ENCODE measurements at regions of chr12 and their contacts with region 1.

Region 1: GRCh38 chr12:109775172-109775881 is 57.9 kb downstream of the TRPV4 start:
- DNase-seq: peak; percentile 63 to 88 (median 78)
- ATAC-seq: peak; percentile 72 to 90 (median 89)
- H3K4me3 ChIP-seq: no peak overlapping the region
- H3K27ac ChIP-seq: no peak overlapping the region
- H3K4me1 ChIP-seq: peaks cover 3 to 5% (median 3%) of the 10 kb centered on the region in 3 donors
- H3K27me3 ChIP-seq: no peaks in the 10 kb centered on the region
- CTCF ChIP-seq: peak; percentile 74 to 86 (median 80)

Region 2: DNA sequence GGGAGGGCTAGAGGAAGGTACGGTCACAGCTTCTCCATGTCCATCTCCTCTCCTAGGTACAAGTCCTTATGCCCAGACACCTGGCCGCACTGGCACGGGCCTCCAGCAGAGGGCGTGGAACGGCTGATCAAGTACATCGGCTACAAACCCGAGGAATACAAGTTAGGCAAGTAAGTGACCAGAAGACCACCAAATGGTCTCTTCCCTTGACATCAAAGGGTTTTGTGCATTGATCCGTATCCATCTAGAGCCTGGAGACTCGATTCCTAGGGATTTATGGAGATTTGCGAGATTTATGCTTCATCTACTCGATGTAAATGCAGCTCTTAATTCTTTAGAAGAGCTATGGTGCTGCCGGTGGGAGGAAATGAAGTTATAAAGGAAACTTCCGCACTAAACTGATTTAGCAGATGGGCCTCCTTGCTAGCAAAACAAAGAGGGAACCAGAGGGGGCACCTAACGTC is 342.5 kb before region 1 on chr12:
- intact Hi-C with region 1: loop called in 1 of 3 experiments (anchors 10 kb)
- DNase-seq: peak; percentile 69 to 95 (median 84)
- ATAC-seq: peak; percentile 70 to 92 (median 88)
- H3K4me3 ChIP-seq: no peak overlapping the region
- H3K27ac ChIP-seq: no peak overlapping the region
- H3K4me1 ChIP-seq: no peaks in the 10 kb centered on the region
- H3K27me3 ChIP-seq: no peaks in the 10 kb centered on the region
- CTCF ChIP-seq: peak; percentile 63 to 80 (median 73)

Region 3: GRCh38 chr12:109518820-109519665 is 256.3 kb before region 1 on chr12:
- intact Hi-C with region 1: loop called in 2 of 3 experiments (anchors 5 to 10 kb)
- DNase-seq: peak in 5 of 6 donors; percentile 27 to 74 (median 46)
- ATAC-seq: peak in 3 of 4 donors; percentile 81 to 87 (median 86)
- H3K4me3 ChIP-seq: no peak overlapping the region
- H3K27ac ChIP-seq: peak overlapping the region in 1 of 4 donors; percentile 14
- H3K4me1 ChIP-seq: no peaks in the 10 kb centered on the region
- H3K27me3 ChIP-seq: no peaks in the 10 kb centered on the region
- CTCF ChIP-seq: peak; percentile 55 to 77 (median 60)

Region 4: GRCh38 chr12:109597795-109598427 is 177.4 kb before region 1 on chr12:
- intact Hi-C with region 1: loop called in 2 of 3 experiments (anchors 5 kb)
- DNase-seq: peak; percentile 78 to 95 (median 89)
- ATAC-seq: peak; percentile 87 to 97 (median 94)
- H3K4me3 ChIP-seq: no peak overlapping the region
- H3K27ac ChIP-seq: no peak overlapping the region
- H3K4me1 ChIP-seq: peaks cover 0 to 14% (median 12%) of the 10 kb centered on the region in 3 donors
- H3K27me3 ChIP-seq: no peaks in the 10 kb centered on the region
- CTCF ChIP-seq: peak; percentile 90 to 96 (median 92)

Region 5: DNA sequence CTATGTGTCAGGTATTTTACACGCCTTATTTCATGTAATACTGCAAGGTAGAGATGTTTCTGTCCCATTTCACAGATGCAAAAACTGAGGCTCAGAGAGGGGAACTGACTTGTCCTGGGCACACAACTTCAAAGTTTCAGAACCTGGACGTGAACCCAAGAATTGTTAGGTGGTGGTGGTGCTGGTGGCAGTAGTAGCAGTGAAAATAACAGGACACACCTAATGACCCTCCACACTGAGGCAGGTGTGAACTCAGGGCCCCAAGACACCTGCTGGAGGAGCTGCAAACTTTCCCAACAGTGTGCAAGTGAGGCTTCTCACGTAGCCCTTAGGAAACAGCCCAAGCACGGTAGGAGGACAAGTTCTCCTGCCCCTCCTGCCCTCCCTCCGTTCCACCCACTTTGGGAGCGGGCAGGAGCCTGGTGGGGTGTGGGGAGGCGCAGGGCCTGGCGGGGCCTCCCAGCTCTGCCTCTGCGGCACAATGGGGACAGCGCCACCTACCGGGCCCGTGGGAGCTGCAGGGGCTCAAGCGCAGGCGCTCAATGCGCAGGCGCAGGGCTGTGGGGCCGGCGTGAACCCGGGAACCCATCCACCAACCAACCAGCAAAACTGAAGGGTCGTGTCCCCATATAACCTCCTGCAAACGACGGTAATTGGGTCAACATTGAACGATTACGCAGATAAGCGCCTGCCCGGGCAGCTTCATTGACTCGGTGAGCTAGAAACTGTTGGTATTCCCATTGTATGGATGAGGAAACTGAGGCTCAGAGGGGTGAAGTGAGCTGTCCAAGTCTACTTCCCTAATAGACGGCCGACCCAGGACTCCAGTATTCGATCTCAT is 69.9 kb after region 1 on chr12:
- intact Hi-C with region 1: no loop called
- DNase-seq: peak; percentile 79 to 99 (median 91)
- ATAC-seq: peak; percentile 98 to 99 (median 98)
- H3K4me3 ChIP-seq: peak overlapping the region in 1 of 4 donors; percentile 26
- H3K27ac ChIP-seq: no peak overlapping the region
- H3K4me1 ChIP-seq: no peaks in the 10 kb centered on the region
- H3K27me3 ChIP-seq: no peaks in the 10 kb centered on the region
- CTCF ChIP-seq: peak; percentile 97 to 100 (median 99)

Region 6: DNA sequence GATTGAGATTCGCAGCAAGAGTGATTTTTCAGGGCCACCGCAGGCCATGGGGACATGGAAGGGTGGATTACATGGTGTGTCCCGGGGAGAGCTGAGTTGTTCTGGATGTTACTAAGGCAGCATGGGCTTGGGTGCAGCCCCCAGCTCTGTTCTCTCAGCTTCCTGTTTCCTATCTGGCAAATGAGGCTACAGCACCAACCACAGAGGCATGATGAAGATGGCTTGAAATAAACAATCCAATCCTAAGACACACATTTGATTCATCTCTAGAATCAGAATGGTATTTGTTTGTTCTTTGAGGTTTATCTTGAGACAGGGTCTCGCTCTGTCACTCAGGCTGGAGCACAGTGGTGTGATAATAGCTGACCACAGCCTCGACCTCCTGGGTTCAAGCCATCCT is 83.4 kb after region 1 on chr12:
- intact Hi-C with region 1: no loop called
- DNase-seq: no peak
- ATAC-seq: no peak
- H3K4me3 ChIP-seq: no peak overlapping the region
- H3K27ac ChIP-seq: no peak overlapping the region
- H3K4me1 ChIP-seq: peaks cover 4% of the 10 kb centered on the region in 3 donors
- H3K27me3 ChIP-seq: no peaks in the 10 kb centered on the region
- CTCF ChIP-seq: no peak

Region 7: DNA sequence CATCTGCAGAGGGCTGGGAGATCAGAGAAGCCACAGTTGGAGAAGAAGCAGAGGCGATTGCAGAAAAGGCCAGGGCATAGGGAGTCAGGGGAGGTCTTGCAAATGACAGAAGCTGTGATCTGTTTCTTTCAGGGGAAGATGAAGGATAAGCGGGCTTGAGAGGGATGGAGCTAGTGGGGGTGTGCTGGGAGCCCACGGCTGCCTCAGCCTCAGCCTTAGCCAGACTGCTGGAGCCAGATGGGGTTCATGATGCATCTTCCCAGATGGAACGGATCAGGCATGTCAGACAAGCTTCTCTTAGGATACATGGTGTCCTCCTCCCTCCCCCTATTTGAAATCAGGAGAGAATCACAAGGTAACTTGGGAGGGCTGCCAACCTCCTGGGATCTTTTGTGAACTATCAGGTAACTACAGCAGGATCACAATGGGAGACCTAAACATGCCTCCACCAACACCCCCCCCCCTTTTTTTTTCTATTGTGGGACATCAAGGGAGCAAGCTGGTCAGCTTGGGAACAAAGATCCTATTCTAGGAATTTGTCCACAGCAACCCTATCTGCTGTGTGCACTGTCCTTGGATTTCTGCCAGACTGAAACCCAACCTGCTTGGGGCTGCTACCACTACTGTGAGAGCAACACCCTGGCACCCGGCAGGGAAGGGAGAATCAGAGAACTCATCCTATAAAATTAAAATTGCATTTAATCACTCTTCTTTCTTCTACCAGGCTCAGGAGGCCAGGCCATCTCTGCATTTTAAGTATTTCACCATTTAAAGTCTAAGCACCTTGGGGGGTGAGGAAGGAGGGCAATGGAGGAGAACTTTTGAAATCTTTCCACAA is 495.0 kb after region 1 on chr12:
- intact Hi-C with region 1: no loop called
- DNase-seq: peak in 2 of 6 donors; percentile 31 to 44
- ATAC-seq: peak in 3 of 4 donors; percentile 65 to 72 (median 70)
- H3K4me3 ChIP-seq: no peak overlapping the region
- H3K27ac ChIP-seq: no peak overlapping the region
- H3K4me1 ChIP-seq: peaks cover 0 to 9% (median 0%) of the 10 kb centered on the region in 3 donors
- H3K27me3 ChIP-seq: no peaks in the 10 kb centered on the region
- CTCF ChIP-seq: no peak